ENCODE measurements at regions of chr2 and their contacts with region 1.

Region 1: DNA sequence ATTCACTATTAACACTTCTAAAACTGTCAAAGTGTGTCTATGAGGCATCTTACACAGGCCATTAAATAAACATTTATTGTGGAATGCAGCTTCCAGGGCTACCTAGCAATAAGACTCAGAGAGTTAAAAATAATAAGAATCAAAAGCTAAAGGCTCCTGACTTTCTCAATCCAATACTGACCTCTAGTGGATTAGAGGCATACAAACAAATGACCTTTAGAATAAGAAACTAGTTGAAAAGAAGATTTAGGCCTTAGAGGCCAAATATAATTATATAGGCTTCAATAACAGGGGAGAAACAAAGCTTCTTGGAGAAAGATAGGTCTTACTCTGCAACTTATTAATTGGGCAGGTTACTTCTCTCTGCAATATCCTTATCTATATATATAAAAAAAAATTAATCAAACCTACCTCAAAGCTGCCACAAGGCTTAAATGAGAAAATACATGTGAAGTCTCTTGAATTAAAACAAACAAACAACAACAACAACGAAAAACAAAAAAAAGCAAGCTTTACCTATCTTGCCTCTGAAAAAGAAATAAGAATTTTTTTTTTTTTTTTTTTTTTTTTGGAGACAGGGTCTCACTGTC is 246.1 kb downstream of the EXOC6B start:
- DNase-seq: peak; percentile 70
- ATAC-seq: no peak
- H3K4me3 ChIP-seq: no peak overlapping the region
- H3K27ac ChIP-seq: no peak overlapping the region
- H3K4me1 ChIP-seq: peaks cover 7% of the 10 kb centered on the region
- H3K27me3 ChIP-seq: no peaks in the 10 kb centered on the region
- CTCF ChIP-seq: peak; percentile 71
- EP300 ChIP-seq: no peak
- POLR2A ChIP-seq: no peak
- RAD21 ChIP-seq: peak; percentile 81

Region 2: GRCh38 chr2:71798266-71799012 is 781.2 kb before region 1 on chr2:
- CTCF ChIA-PET with region 1: no interaction called
- POLR2A ChIA-PET with region 1: no interaction called
- in situ Hi-C with region 1: loop called (anchors 25 kb)
- intact Hi-C with region 1: no loop called
- DNase-seq: peak; percentile 61
- ATAC-seq: peak; percentile 92
- H3K4me3 ChIP-seq: no peak overlapping the region
- H3K27ac ChIP-seq: no peak overlapping the region
- H3K4me1 ChIP-seq: peaks cover 5% of the 10 kb centered on the region; the same call in 1 of the 2 replicates
- H3K27me3 ChIP-seq: peaks cover 0 to 31% of the 10 kb centered on the region in 2 experiments; a peak in 4 of 5 replicates
- CTCF ChIP-seq: peak; percentile 88
- EP300 ChIP-seq: no peak
- POLR2A ChIP-seq: no peak
- RAD21 ChIP-seq: peak; percentile 92

Region 3: GRCh38 chr2:71923887-71924533 is 655.7 kb before region 1 on chr2:
- CTCF ChIA-PET with region 1: interaction called, 8 read pairs
- POLR2A ChIA-PET with region 1: no interaction called
- in situ Hi-C with region 1: loop called (anchors 10 kb)
- intact Hi-C with region 1: loop called (anchors 1 kb)
- DNase-seq: peak; percentile 76
- ATAC-seq: peak; percentile 89
- H3K4me3 ChIP-seq: no peak overlapping the region
- H3K27ac ChIP-seq: no peak overlapping the region
- H3K4me1 ChIP-seq: no peaks in the 10 kb centered on the region
- H3K27me3 ChIP-seq: peaks cover 5 to 45% of the 10 kb centered on the region in 2 experiments; a peak in 4 of 5 replicates
- CTCF ChIP-seq: peak; percentile 93
- EP300 ChIP-seq: no peak
- POLR2A ChIP-seq: no peak
- RAD21 ChIP-seq: peak; percentile 78; the same call in 1 of the 2 replicates

Region 4: GRCh38 chr2:72137498-72138010 is 442.1 kb before region 1 on chr2:
- CTCF ChIA-PET with region 1: interaction called, 10 read pairs
- POLR2A ChIA-PET with region 1: no interaction called
- in situ Hi-C with region 1: no loop called
- intact Hi-C with region 1: loop called (anchors 1 kb)
- DNase-seq: peak; percentile 58
- ATAC-seq: peak; percentile 88
- H3K4me3 ChIP-seq: peak overlapping the region; percentile 26 to 63 (median 41); a peak in 3 of 6 replicates
- H3K27ac ChIP-seq: no peak overlapping the region
- H3K4me1 ChIP-seq: peaks cover 24% of the 10 kb centered on the region
- H3K27me3 ChIP-seq: peaks cover 20 to 84% of the 10 kb centered on the region in 2 experiments
- CTCF ChIP-seq: peak; percentile 96
- EP300 ChIP-seq: no peak
- POLR2A ChIP-seq: no peak
- RAD21 ChIP-seq: peak; percentile 72

Region 5: GRCh38 chr2:72325592-72326422 is 253.9 kb before region 1 on chr2:
- CTCF ChIA-PET with region 1: interaction called, 7 read pairs
- POLR2A ChIA-PET with region 1: no interaction called
- in situ Hi-C with region 1: no loop called
- intact Hi-C with region 1: loop called (anchors 2 kb)
- DNase-seq: peak; percentile 50
- ATAC-seq: peak; percentile 90
- H3K4me3 ChIP-seq: no peak overlapping the region
- H3K27ac ChIP-seq: no peak overlapping the region
- H3K4me1 ChIP-seq: no peaks in the 10 kb centered on the region
- H3K27me3 ChIP-seq: no peaks in the 10 kb centered on the region
- CTCF ChIP-seq: peak; percentile 73
- EP300 ChIP-seq: no peak
- POLR2A ChIP-seq: no peak
- RAD21 ChIP-seq: peak; percentile 47; the same call in 1 of the 2 replicates

Measured in HepG2 (cell line).